Adrenal gland (tissue), 19 donors: ENCODE measurements at regions of chr20 and their contacts with region 1.

Region 1: DNA sequence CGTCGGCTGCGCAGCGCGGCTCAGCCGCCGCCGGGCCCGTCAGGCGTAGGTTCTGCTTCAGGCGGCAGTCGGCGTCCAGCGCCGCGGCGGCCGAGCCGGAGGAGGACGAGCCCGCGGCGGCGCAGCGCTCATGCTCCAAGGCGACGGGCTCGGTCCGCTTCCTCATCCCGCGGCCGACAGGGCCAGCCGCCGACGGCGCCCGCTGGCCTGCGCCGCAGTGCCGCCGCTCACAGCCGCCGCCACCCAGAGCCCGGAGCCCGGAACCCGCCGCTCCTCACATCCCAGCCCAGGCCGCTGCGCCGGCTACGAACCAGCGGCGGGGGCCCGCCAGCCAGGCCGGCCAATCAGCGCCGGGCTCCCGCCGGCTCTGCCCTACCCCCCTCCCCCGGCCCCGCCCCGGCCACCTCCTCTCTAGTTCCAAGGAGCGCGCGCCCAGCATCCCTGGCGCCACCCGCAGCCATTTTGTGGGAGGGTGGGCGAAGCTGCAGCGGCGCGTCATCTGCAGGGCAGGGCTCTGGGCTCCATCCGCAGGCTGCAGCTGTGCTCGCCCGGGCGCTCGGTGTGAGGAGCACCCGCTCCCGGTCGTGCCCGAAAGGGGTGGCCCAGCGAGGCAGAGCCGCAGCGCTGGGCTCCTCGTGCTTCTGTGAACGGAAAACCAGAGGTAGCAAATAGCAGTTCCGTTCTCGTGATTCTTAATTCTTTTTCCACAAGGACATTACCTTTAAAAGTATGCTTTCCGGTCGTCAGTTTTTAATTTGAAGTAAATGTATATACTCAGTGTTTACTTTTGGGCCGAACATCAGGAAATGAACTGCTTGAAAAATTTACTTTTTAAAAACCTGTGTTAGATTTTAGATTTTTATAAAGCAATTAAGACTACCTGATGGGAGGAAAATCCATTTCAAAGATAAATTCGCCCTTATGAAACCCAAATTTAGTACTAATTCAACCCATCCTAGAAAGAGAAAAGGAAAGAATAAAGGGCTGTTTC is at the start of gene ABHD12:
- DNase-seq: peak; percentile 95 to 98 (median 97)
- H3K4me3 ChIP-seq: peak within 1 kb of the TSS; percentile 57 to 88 (median 73)
- H3K27ac ChIP-seq: peak within 1 kb of the TSS in 4 of 5 donors; percentile 85 to 94 (median 86)
- H3K4me1 ChIP-seq: peaks cover 5 to 7% of the 10 kb centered on the region in 2 donors
- H3K27me3 ChIP-seq: no peaks in the 10 kb centered on the region
- CTCF ChIP-seq: no peak
- POLR2A ChIP-seq: peak; percentile 52 to 93
- total RNA-seq, gene ABHD12: 17.6 to 95.8 (median 55.0) TPM

Region 2: GRCh38 chr20:25065625-25066338 is 325.1 kb before region 1 on chr20:
- intact Hi-C with region 1: loop called in 1 of 2 experiments (anchors 10 kb)
- DNase-seq: peak; percentile 38 to 86 (median 71)
- H3K4me3 ChIP-seq: no peak overlapping the region
- H3K27ac ChIP-seq: no peak overlapping the region
- H3K4me1 ChIP-seq: no peaks in the 10 kb centered on the region
- H3K27me3 ChIP-seq: peaks cover 9% of the 10 kb centered on the region
- CTCF ChIP-seq: peak; percentile 35 to 92 (median 84)
- POLR2A ChIP-seq: no peak

Region 3: DNA sequence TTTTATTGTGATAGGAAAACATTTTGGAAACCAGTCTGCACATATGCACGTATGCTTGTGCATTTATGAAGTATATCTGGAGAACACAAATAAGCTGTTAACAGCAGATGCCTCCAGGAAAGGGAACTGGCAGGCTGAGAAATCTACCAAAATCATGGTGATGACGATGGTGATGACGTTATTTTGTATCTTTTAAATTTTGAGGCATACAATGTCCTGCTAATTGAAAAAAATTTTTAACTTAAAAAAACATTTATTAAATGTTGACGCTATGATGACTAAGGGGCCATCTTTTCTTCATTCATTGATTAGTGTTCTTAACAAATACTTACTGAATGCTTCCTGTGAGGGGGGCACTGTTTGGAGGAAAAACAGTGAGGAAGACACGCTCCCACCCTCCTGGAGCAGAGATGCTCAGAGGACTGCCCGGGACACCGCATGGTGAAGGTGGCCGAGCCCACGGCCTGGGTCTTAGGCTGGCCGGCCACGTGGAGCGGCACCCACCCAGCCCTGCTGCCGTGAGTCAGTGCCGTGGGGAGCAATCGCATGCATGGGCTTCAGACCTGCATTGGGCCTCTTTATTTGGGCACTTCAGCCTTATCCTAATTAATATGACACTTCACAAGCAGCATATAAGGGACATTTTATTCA is 211.3 kb before region 1 on chr20:
- intact Hi-C with region 1: loop called in 1 of 2 experiments (anchors 10 kb)
- DNase-seq: no peak
- H3K4me3 ChIP-seq: no peak overlapping the region
- H3K27ac ChIP-seq: no peak overlapping the region
- H3K4me1 ChIP-seq: no peaks in the 10 kb centered on the region
- H3K27me3 ChIP-seq: no peaks in the 10 kb centered on the region
- CTCF ChIP-seq: no peak
- POLR2A ChIP-seq: no peak

Region 4: DNA sequence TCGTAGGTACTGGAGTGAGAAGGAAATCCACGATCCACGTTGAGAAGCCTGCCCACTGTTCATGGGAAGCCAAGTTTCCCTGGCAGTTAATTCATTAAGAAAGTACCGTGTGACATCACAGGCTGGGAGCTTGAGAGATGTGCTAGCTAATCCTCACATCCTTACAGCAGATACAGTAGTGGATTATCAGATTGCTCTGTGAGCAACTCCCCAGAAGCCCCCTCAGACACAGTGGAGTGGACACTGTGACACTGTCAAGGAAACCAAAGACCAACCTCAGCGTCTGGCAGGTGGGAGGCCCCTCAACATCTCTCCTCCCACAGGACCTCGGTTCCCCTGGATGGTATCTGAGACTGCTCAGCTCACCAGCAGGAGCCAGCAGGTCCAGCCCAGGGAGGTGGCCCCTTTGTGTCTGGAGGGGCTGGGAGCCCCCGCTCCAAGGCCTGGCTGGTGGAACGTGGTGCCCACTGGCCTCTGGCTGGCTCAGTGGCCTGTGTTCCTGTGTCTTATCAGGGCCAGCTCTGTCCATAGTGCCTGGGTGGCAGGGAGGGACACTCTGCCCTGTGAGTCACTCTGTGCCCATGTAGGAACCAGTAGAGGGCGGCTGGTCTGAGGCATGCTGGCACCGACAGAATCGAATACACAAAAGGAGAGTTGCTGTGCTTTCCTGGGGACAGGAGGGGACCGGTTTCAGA is 135.7 kb before region 1 on chr20:
- intact Hi-C with region 1: loop called in 1 of 2 experiments (anchors 10 kb)
- DNase-seq: peak; percentile 62 to 90 (median 84)
- H3K4me3 ChIP-seq: no peak overlapping the region
- H3K27ac ChIP-seq: peak overlapping the region in 3 of 5 donors; percentile 27 to 66 (median 58)
- H3K4me1 ChIP-seq: peaks cover 16 to 35% of the 10 kb centered on the region in 2 donors
- H3K27me3 ChIP-seq: no peaks in the 10 kb centered on the region
- CTCF ChIP-seq: peak in 5 of 6 experiments; percentile 6 to 37 (median 28)
- POLR2A ChIP-seq: peak in 1 of 2 donors; percentile 50

Region 5: GRCh38 chr20:25294459-25295385 is 96.1 kb before region 1 on chr20:
- intact Hi-C with region 1: loop called (anchors 5 to 10 kb)
- DNase-seq: peak in 2 of 7 donors; percentile 48 to 71
- H3K4me3 ChIP-seq: no peak overlapping the region
- H3K27ac ChIP-seq: peak overlapping the region in 4 of 5 donors; percentile 65 to 88 (median 79)
- H3K4me1 ChIP-seq: peaks cover 25 to 28% of the 10 kb centered on the region in 2 donors
- H3K27me3 ChIP-seq: no peaks in the 10 kb centered on the region
- CTCF ChIP-seq: peak; percentile 40 to 68 (median 58)
- POLR2A ChIP-seq: no peak